T-cell (primary cell): ENCODE measurements at regions of chr11 and their contacts with region 1.

Region 1: GRCh38 chr11:9748361-9748970 is 84.6 kb downstream of the SWAP70 start:
- DNase-seq: peak in 33 of 35 experiments; percentile 21 to 76 (median 39)
- ATAC-seq: peak; percentile 89 to 100 (median 92)
- H3K4me3 ChIP-seq: no peak overlapping the region
- H3K4me3 Mint-ChIP-seq: no peak overlapping the region
- H3K27ac ChIP-seq: no peak overlapping the region
- H3K27ac Mint-ChIP-seq: no peak overlapping the region
- H3K4me1 ChIP-seq: peaks cover 0 to 4% of the 10 kb centered on the region in 2 experiments
- H3K4me1 Mint-ChIP-seq: peaks cover 0 to 13% (median 0%) of the 10 kb centered on the region in 3 donors
- H3K27me3 ChIP-seq: no peaks in the 10 kb centered on the region
- H3K27me3 Mint-ChIP-seq: no peaks in the 10 kb centered on the region

Region 2: DNA sequence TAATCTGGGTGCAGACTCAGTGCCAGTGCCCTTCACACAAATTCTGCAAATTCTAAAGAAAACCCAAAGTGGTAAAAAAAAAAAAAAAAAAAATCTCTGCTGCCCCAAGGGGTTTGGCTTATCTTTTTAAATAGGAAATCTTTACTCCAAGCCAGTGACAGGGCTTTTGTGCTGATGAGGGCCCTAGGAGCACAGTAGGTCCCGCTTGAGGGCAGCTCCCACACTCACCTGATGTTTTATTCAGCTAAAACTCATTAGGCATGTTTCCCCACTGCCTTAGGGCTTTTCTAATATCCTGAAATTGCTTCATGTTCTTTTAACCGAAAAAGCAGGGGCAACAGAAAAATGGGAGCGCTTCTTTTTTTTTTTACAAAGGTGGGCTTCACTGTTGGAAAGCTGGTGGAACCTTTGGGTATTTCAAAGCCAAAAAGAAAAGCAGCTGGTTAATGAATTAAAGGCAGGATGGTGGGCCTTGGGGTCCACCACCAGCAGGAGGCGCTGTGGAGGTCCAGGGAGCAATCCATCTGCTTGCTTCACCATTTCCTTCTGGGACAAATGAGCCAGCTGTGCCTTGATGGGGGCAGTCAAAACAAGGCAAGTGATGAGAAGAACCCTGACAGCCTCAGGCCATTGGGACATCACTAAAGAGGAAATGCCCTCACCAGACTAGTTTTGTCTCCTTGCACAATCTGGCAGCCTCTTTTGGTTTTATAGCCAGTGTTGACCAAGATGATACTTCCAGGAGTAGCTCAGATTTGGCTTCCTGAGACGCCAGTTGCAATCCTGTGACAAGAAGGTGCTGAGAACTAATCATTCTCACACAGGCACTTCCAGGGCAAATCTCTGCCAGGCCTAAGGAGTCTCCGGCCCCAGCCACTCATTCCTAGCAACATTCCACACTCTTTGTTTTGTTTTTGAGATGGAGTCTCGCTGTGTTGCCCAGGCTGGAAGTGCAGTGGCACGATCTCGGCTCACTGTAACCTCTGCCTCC is 213.4 kb before region 1 on chr11:
- CTCF ChIA-PET with region 1: interaction called, 8 to 34 read pairs
- POLR2A ChIA-PET with region 1: no interaction called
- DNase-seq: peak; percentile 13 to 85 (median 67)
- ATAC-seq: peak; percentile 34 to 65 (median 55)
- H3K4me3 ChIP-seq: no peak overlapping the region
- H3K4me3 Mint-ChIP-seq: no peak overlapping the region
- H3K27ac ChIP-seq: no peak overlapping the region
- H3K27ac Mint-ChIP-seq: no peak overlapping the region
- H3K4me1 ChIP-seq: no peaks in the 10 kb centered on the region
- H3K4me1 Mint-ChIP-seq: no peaks in the 10 kb centered on the region
- H3K27me3 ChIP-seq: no peaks in the 10 kb centered on the region
- H3K27me3 Mint-ChIP-seq: no peaks in the 10 kb centered on the region